GM12878 (cell line): ENCODE measurements at regions of chr12 and their contacts with region 1.

Region 1: DNA sequence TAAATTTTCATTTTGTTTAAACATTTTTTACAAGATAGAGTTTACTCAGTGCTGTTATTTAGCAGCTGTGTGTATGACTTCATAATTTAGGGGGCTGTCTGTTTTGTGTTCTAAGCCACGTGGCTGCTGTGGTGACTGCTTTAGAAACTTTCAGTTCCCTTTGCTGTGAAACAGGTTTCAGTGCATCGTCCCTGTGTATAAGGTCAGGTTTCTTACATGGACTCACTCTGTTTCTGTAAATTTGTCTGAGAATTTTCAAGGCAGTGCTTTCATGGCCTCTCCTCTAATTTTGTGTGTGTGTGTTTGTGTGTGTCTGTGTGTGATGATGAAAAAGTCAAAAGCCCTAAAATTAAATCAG is 32.4 kb downstream of the BICD1 start:
- DNase-seq: peak; percentile 92
- ATAC-seq: peak; percentile 94
- H3K4me3 ChIP-seq: peak overlapping the region; percentile 71; the same call in 1 of the 2 replicates
- H3K27ac ChIP-seq: peak overlapping the region; percentile 98
- H3K4me1 ChIP-seq: peaks cover 23% of the 10 kb centered on the region
- H3K27me3 ChIP-seq: no peaks in the 10 kb centered on the region
- CTCF ChIP-seq: no peak
- EP300 ChIP-seq: peak; percentile 86 to 97
- POLR2A ChIP-seq: peak; percentile 59
- RAD21 ChIP-seq: 0 out of 2 replicates have a peak, but pooled peaks have one; percentile 15

Region 2: GRCh38 chr12:31959161-31959700 is 179.8 kb before region 1 on chr12 and contains the start of gene RESF1:
- CTCF ChIA-PET with region 1: no interaction called
- POLR2A ChIA-PET with region 1: no interaction called
- RAD21 ChIA-PET with region 1: interaction called, 3 read pairs
- SMC1A ChIA-PET with region 1: no interaction called
- in situ Hi-C with region 1: no loop called
- intact Hi-C with region 1: loop called (anchors 10 kb)
- DNase-seq: peak; percentile 57
- ATAC-seq: peak; percentile 92
- H3K4me3 ChIP-seq: peak within 1 kb of the TSS; percentile 86
- H3K27ac ChIP-seq: peak within 1 kb of the TSS; percentile 76
- H3K4me1 ChIP-seq: peaks cover 12% of the 10 kb centered on the region; the same call in 1 of the 2 replicates
- H3K27me3 ChIP-seq: no peaks in the 10 kb centered on the region
- CTCF ChIP-seq: no peak
- EP300 ChIP-seq: no peak
- POLR2A ChIP-seq: peak; percentile 81
- RAD21 ChIP-seq: no peak
- polyA plus RNA-seq, gene RESF1: 18.9 to 23.6 TPM

Region 3: GRCh38 chr12:32032205-32032810 is 106.7 kb before region 1 on chr12:
- CTCF ChIA-PET with region 1: no interaction called
- POLR2A ChIA-PET with region 1: no interaction called
- RAD21 ChIA-PET with region 1: no interaction called
- SMC1A ChIA-PET with region 1: no interaction called
- in situ Hi-C with region 1: no loop called
- intact Hi-C with region 1: no loop called
- DNase-seq: no peak
- ATAC-seq: no peak
- H3K4me3 ChIP-seq: no peak overlapping the region
- H3K27ac ChIP-seq: no peak overlapping the region
- H3K4me1 ChIP-seq: no peaks in the 10 kb centered on the region; the same call in 1 of the 2 replicates
- H3K27me3 ChIP-seq: no peaks in the 10 kb centered on the region
- CTCF ChIP-seq: no peak
- EP300 ChIP-seq: no peak
- POLR2A ChIP-seq: no peak
- RAD21 ChIP-seq: no peak

Region 4: GRCh38 chr12:32062881-32063280 is 76.2 kb before region 1 on chr12:
- CTCF ChIA-PET with region 1: no interaction called
- POLR2A ChIA-PET with region 1: no interaction called
- RAD21 ChIA-PET with region 1: interaction called, 4 read pairs
- SMC1A ChIA-PET with region 1: interaction called, 3 read pairs
- in situ Hi-C with region 1: no loop called
- intact Hi-C with region 1: loop called (anchors 5 kb)
- DNase-seq: no peak
- ATAC-seq: peak; percentile 45
- H3K4me3 ChIP-seq: no peak overlapping the region
- H3K27ac ChIP-seq: no peak overlapping the region
- H3K4me1 ChIP-seq: peaks cover 2% of the 10 kb centered on the region; the same call in 1 of the 2 replicates
- H3K27me3 ChIP-seq: no peaks in the 10 kb centered on the region
- CTCF ChIP-seq: 0 out of 6 replicates have a peak, but pooled peaks of 1 of the 3 experiments have one; percentile 3
- EP300 ChIP-seq: no peak
- POLR2A ChIP-seq: no peak
- RAD21 ChIP-seq: no peak

Region 5: DNA sequence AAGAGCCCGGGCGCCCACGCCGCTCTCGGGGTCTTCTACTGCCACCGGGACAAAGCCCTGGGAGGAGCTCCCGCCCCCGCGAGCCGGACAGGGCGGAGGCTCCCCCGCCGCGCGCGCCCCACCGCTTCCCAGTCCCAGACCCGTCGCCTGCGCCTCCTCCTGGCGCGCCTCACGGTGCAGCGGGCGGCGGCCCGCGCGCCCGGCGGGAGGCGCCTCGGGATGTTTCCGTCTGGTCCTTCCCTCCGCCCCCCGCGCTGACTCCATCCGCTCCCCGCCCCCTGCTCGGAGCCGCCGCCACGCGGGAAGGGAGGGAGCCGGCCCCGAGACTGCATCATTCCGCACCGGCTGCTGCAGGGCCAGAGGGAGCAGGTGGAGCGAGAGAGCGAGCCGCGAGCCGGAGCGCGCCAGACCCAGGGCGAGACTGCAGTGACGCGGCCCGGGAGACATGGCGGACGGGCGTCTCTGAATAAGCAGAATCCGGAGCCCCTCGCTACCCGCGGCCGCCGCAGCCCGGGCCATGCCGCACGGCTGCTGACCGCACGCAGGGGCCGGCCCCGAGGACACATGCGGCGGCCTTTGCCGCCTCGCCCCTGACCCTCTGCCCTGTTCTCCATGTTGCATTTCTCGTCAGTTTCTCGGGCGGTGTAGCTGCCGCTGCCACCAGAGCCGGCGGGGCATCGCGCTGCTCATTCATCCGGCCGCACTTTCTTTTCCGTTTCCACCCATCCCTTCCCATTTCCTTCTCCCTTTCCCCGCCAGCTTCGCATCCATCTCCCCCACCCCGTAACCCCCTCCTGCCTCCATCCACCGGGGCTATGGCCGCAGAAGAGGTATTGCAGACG is 32.3 kb before region 1 on chr12 and contains the start of gene BICD1:
- CTCF ChIA-PET with region 1: interaction called, 6 read pairs
- POLR2A ChIA-PET with region 1: interaction called, 7 read pairs
- RAD21 ChIA-PET with region 1: interaction called, 21 read pairs
- SMC1A ChIA-PET with region 1: interaction called, 10 read pairs
- in situ Hi-C with region 1: no loop called
- intact Hi-C with region 1: loop called (anchors 2 kb)
- DNase-seq: peak; percentile 32
- ATAC-seq: peak; percentile 88
- H3K4me3 ChIP-seq: peak within 1 kb of the TSS; percentile 80
- H3K27ac ChIP-seq: peak within 1 kb of the TSS; percentile 63
- H3K4me1 ChIP-seq: peaks cover 5% of the 10 kb centered on the region
- H3K27me3 ChIP-seq: no peaks in the 10 kb centered on the region
- CTCF ChIP-seq: peak; percentile 2 to 56 (median 21); a peak in 3 of 6 replicates
- EP300 ChIP-seq: no peak
- POLR2A ChIP-seq: peak; percentile 94
- RAD21 ChIP-seq: peak; percentile 44; the same call in 1 of the 2 replicates
- polyA plus RNA-seq, gene BICD1: 4.7 to 5.6 TPM

Region 6: DNA sequence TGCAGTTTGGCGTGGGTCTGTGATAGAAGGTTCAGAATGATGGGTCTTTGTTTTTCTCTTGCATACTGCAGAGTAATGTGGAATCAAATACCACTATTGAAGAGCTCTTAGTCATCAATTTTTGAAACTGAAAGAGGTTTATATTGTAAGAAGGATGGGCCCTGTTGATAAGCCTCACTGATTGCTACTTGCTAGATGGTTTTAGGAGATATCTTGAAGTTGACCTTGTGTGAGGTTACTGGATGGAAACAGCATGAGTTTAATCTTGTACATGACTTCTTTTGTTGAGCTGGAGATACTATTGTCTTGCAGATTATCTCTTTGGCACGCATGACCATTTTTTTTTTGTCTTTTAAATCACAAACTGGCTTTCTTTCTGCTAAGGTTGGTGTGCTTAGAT is 18.6 kb before region 1 on chr12:
- CTCF ChIA-PET with region 1: interaction called, 6 read pairs
- POLR2A ChIA-PET with region 1: interaction called, 10 read pairs
- RAD21 ChIA-PET with region 1: interaction called, 3 read pairs
- SMC1A ChIA-PET with region 1: interaction called, 10 read pairs
- in situ Hi-C with region 1: no loop called
- intact Hi-C with region 1: no loop called
- DNase-seq: no peak
- ATAC-seq: peak; percentile 90
- H3K4me3 ChIP-seq: no peak overlapping the region
- H3K27ac ChIP-seq: no peak overlapping the region
- H3K4me1 ChIP-seq: peaks cover 10% of the 10 kb centered on the region; the same call in 1 of the 2 replicates
- H3K27me3 ChIP-seq: no peaks in the 10 kb centered on the region
- CTCF ChIP-seq: no peak
- EP300 ChIP-seq: no peak
- POLR2A ChIP-seq: no peak
- RAD21 ChIP-seq: no peak

Region 7: GRCh38 chr12:32252199-32253073 is 113.4 kb after region 1 on chr12:
- CTCF ChIA-PET with region 1: no interaction called
- POLR2A ChIA-PET with region 1: interaction called, 15 read pairs
- RAD21 ChIA-PET with region 1: interaction called, 16 read pairs
- SMC1A ChIA-PET with region 1: interaction called, 8 read pairs
- in situ Hi-C with region 1: no loop called
- intact Hi-C with region 1: loop called (anchors 5 kb)
- DNase-seq: peak; percentile 76
- ATAC-seq: peak; percentile 98
- H3K4me3 ChIP-seq: peak overlapping the region; percentile 54
- H3K27ac ChIP-seq: peak overlapping the region; percentile 93
- H3K4me1 ChIP-seq: peaks cover 13% of the 10 kb centered on the region
- H3K27me3 ChIP-seq: no peaks in the 10 kb centered on the region
- CTCF ChIP-seq: no peak
- EP300 ChIP-seq: peak; percentile 43 to 57; a peak in 2 of 4 replicates
- POLR2A ChIP-seq: no peak
- RAD21 ChIP-seq: no peak

Region 8: DNA sequence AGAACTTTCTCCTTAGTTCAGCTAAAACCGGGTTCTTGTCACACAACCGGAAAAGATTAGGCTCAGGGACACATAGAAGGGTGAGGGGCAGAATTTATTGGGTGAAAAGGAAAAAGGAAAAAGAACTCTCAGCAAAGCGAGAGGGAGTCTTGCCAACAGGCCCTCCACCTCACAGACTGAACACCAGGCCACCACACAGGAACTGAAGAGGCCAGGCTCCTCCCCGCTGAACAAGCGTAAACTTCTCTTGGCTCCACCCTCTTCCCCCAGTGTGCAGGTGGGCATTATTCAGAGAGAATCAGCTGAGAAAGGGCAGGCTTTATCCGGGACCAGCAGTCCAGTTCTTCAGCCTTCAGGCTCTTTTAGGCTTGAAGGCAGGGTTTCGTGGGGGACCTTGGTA is 134.7 kb after region 1 on chr12:
- CTCF ChIA-PET with region 1: no interaction called
- POLR2A ChIA-PET with region 1: interaction called, 3 read pairs
- RAD21 ChIA-PET with region 1: interaction called, 3 read pairs
- SMC1A ChIA-PET with region 1: interaction called, 3 read pairs
- in situ Hi-C with region 1: no loop called
- intact Hi-C with region 1: loop called (anchors 10 kb)
- DNase-seq: no peak
- ATAC-seq: peak; percentile 95
- H3K4me3 ChIP-seq: peak overlapping the region; percentile 24; the same call in 1 of the 2 replicates
- H3K27ac ChIP-seq: peak overlapping the region; percentile 82
- H3K4me1 ChIP-seq: peaks cover 33% of the 10 kb centered on the region
- H3K27me3 ChIP-seq: no peaks in the 10 kb centered on the region
- CTCF ChIP-seq: no peak
- EP300 ChIP-seq: no peak
- POLR2A ChIP-seq: peak; percentile 87
- RAD21 ChIP-seq: no peak